ENCODE measurements at regions of chr15 and their contacts with region 1.

Region 1: GRCh38 chr15:34987985-34988873 is at the start of gene ZNF770:
- DNase-seq: peak; percentile 86
- ATAC-seq: peak; percentile 91
- H3K4me3 Mint-ChIP-seq: peak within 1 kb of the TSS; percentile 98
- H3K27ac Mint-ChIP-seq: peak within 1 kb of the TSS; percentile 99
- H3K4me1 Mint-ChIP-seq: peaks cover 41% of the 10 kb centered on the region
- H3K27me3 Mint-ChIP-seq: no peaks in the 10 kb centered on the region
- total RNA-seq, gene ZNF770: 28.7 to 42.8 TPM

Region 2: GRCh38 chr15:34969340-34970097 is 18.7 kb before region 1 on chr15 and contains the start of gene AQR:
- CTCF ChIA-PET with region 1: interaction called, 54 read pairs
- DNase-seq: peak; percentile 97
- ATAC-seq: peak; percentile 97
- H3K4me3 Mint-ChIP-seq: peak within 1 kb of the TSS; percentile 94
- H3K27ac Mint-ChIP-seq: peak within 1 kb of the TSS; percentile 85
- H3K4me1 Mint-ChIP-seq: peaks cover 32% of the 10 kb centered on the region
- H3K27me3 Mint-ChIP-seq: no peaks in the 10 kb centered on the region
- total RNA-seq, gene AQR: 33.8 to 38.2 TPM

Region 3: DNA sequence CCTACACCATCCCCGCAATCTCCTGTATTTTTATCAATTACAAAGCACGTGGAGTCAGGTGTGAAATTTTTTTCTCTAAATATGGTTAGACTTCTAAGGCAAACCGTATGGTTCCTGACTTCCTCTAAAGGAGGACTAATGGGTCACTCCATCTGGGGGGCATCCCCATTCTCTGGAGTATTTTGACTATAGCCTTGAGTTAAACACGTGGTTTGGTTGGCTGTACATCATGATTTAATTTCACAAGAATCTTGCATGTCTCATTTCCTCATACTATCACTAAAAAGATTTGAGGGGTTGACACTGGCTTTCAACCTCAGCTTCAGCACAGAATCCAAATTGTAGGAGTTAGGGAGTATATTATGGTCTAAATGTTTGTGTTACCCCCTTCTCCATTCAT is 25.1 kb after region 1 on chr15:
- CTCF ChIA-PET with region 1: no interaction called
- DNase-seq: no peak
- ATAC-seq: no peak
- H3K4me3 Mint-ChIP-seq: no peak overlapping the region
- H3K27ac Mint-ChIP-seq: no peak overlapping the region
- H3K4me1 Mint-ChIP-seq: no peaks in the 10 kb centered on the region
- H3K27me3 Mint-ChIP-seq: peaks cover 14% of the 10 kb centered on the region

Region 4: GRCh38 chr15:35194296-35194695 is 206.1 kb after region 1 on chr15:
- CTCF ChIA-PET with region 1: no interaction called
- DNase-seq: no peak
- ATAC-seq: no peak
- H3K4me3 Mint-ChIP-seq: no peak overlapping the region
- H3K27ac Mint-ChIP-seq: no peak overlapping the region
- H3K4me1 Mint-ChIP-seq: no peaks in the 10 kb centered on the region
- H3K27me3 Mint-ChIP-seq: peaks cover 5% of the 10 kb centered on the region

Region 5: DNA sequence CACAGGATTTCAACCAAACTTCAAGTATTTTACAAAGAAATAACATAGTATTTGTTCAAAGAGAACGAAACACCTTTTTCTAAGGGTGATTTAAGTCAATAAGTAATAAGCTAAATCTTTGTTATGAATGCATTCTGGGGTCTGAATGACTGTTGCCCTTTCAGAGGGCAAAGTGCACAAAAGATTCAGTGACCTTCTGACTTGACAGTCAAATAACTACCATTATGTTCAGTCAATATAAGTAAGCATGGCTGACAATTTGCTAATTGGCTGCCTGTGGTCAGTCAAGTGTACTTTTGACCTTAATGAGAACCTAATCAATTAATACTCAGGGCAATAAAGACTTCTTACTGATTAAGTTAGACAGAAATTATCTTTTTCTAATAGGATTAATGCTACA is 230.0 kb after region 1 on chr15:
- CTCF ChIA-PET with region 1: no interaction called
- DNase-seq: no peak
- ATAC-seq: no peak
- H3K4me3 Mint-ChIP-seq: no peak overlapping the region
- H3K27ac Mint-ChIP-seq: no peak overlapping the region
- H3K4me1 Mint-ChIP-seq: no peaks in the 10 kb centered on the region
- H3K27me3 Mint-ChIP-seq: no peaks in the 10 kb centered on the region